Right ventricle myocardium inferior (tissue), 1 donor: ENCODE measurements at regions of chr22 and their contacts with region 1.

Region 1: GRCh38 chr22:32771756-32772155 is 29.7 kb upstream of the TIMP3 start:
- DNase-seq: no peak
- ATAC-seq: peak; percentile 45

Region 2: GRCh38 chr22:32606181-32606580 is 165.6 kb before region 1 on chr22:
- intact Hi-C with region 1: no loop called
- DNase-seq: no peak
- ATAC-seq: no peak

Region 3: DNA sequence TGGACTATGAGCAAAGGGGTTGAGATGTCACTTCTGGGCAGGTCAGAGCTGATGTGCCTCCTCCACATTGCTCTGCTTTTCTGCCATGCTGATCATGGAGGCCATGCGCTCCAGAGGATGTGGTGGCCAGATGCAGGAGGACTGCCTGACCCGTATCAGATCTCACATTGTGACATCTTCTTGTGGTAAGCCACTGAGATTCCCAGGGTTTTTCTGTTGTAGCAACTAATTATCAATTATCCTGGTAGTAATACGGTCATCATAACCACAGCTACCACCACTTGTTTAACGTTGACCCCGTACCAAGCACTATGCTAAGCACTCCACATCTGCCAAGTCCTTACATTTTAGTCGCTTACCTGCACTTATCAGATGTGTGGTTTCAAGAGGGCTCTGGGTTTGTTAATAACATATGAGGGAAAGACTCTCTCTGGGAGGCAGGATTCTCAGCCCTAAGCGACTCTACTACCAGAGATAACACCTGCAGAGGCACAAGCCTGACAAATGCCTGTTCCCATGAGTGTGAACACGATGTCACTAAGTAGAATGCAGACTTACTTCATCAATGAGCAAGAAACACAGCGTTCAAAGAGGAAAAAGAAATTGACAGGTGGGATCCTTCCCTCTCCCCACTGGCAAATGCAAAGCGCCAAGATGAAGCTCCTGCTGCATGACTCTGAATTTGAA is 33.8 kb before region 1 on chr22:
- intact Hi-C with region 1: loop called (anchors 5 kb)
- DNase-seq: no peak
- ATAC-seq: no peak